Mucosa of descending colon (tissue), 3 donors: ENCODE measurements at regions of chr1 and their contacts with region 1.

Region 1: GRCh38 chr1:207868774-207869721 is 41.9 kb downstream of the CD34 start:
- DNase-seq: peak; percentile 83 to 91 (median 86)
- ATAC-seq: peak; percentile 86
- H3K4me3 ChIP-seq: peak overlapping the region; percentile 82
- H3K4me1 ChIP-seq: peaks cover 41% of the 10 kb centered on the region
- CTCF ChIP-seq: peak; percentile 93

Region 2: GRCh38 chr1:207502726-207503125 is 366.3 kb before region 1 on chr1:
- intact Hi-C with region 1: no loop called
- DNase-seq: no peak
- ATAC-seq: no peak
- H3K4me3 ChIP-seq: no peak overlapping the region
- H3K4me1 ChIP-seq: no peaks in the 10 kb centered on the region
- CTCF ChIP-seq: no peak

Region 3: DNA sequence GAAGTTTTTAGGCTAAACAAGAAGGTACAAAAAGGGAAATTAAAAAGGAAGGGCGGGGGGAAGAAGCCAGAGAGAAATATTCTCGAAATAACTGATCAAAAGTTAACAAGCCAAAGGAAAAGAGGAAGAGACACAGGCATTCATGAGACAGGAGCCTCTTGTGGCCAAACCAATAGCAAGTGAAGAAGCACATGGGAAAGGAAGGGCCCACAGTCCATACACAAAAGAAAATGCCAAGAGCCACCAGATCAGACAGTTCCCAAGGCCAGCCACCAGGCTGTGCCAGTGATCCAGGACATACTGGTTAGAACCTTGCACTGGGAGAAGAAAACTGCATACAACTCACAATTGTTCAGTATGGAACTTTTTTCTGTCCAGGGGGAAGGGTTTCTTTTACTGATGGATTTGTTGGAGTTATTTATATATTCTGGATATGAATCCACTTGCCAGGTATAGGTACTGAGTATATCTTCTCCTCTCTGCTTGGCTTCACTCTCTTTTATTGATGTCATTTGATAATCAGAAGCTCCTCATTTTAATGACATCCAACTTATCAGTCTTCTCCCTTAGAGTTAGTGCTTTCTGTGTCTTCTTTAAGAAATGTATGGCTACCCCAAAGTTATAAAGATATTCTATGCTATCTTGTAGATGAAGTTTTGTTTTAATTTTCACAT is 40.4 kb before region 1 on chr1:
- intact Hi-C with region 1: loop called in 1 of 2 experiments (anchors 2 kb)
- DNase-seq: peak; percentile 81 to 89 (median 89)
- ATAC-seq: peak; percentile 64
- H3K4me3 ChIP-seq: no peak overlapping the region
- H3K4me1 ChIP-seq: peaks cover 46% of the 10 kb centered on the region
- CTCF ChIP-seq: peak; percentile 78

Region 4: GRCh38 chr1:207941665-207942064 is 72.6 kb after region 1 on chr1:
- intact Hi-C with region 1: no loop called
- DNase-seq: peak; percentile 41 to 65 (median 49)
- ATAC-seq: no peak
- H3K4me3 ChIP-seq: no peak overlapping the region
- H3K4me1 ChIP-seq: no peaks in the 10 kb centered on the region
- CTCF ChIP-seq: no peak

Region 5: DNA sequence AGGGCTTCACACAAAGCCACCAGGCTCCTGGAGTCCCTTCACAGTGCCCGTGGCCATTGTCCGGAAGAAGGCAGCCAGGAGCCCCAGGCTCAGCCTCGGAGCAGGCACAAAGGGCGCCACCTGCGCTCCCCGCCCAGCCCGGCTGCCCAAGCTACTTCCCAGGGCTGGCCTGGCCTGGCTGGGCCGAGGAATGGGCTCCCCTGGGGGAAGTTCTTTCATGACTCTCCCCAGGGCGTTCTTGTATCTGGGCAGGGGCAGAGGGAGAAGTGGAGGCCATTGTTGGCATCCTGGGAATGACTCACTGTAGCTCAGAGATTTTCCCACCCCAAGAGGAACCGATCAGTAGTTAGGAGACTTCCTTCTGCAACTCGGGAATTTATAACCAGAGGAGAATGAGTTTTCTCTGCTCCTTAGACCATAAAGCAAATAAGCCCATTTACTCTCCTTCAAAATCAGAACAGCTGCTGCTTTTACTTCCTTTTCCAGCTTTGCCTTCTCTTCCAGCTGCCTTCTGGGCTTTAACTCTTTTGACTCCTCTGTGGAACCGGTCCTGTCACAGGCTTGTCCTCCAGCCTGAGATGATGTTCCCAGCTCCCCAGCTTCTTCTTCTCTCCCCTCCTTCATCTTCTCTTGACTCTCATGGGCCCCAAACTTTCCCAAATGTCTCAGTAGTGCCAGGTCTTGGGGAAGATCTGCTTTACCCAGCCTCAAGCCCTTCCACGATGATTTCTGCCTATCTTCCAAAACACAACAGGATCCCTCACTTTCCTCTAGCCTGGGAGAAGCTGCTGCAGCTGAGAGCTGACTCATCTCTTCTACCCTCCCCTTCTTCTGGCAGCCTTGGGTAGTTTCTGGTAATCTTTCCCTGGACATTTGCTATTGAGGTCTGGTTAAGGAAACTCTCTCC is 160.6 kb after region 1 on chr1:
- intact Hi-C with region 1: no loop called
- DNase-seq: peak in 2 of 3 donors; percentile 23 to 44
- ATAC-seq: peak; percentile 84
- H3K4me3 ChIP-seq: no peak overlapping the region
- H3K4me1 ChIP-seq: peaks cover 20% of the 10 kb centered on the region
- CTCF ChIP-seq: no peak

Region 6: GRCh38 chr1:208065862-208066261 is 196.8 kb after region 1 on chr1:
- intact Hi-C with region 1: no loop called
- DNase-seq: no peak
- ATAC-seq: peak; percentile 31
- H3K4me3 ChIP-seq: no peak overlapping the region
- H3K4me1 ChIP-seq: no peaks in the 10 kb centered on the region
- CTCF ChIP-seq: no peak